ENCODE measurements at regions of chr1 and their contacts with region 1.

Region 1: GRCh38 chr1:32159189-32159885 is 20.1 kb upstream of the TXLNA start:
- DNase-seq: no peak

Region 2: DNA sequence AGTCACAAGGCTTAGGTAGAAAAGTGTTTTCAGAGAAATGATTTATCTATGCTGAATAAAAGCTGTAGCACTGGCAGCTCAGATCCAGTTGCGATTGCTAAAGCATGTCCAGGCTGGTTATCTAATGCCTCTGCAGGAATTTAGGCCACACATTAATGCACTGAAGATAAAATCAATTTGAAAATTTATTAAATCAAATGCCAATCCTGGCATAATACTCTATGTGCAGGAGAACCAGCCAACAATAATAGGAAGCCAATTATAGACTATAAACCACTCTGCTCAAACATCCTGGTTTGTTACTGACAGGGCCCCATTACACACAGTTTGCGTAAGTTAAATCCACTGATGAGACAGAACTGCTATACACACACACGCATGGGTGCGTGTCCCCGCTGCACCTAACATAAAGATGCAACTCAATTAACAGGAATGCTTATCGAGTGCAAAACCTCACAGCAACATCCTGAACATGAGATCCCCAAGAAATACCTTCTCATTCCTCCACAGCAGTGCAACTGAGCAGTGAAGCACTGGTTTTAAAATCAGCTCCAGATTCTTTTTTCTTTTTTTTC is 261.7 kb before region 1 on chr1:
- intact Hi-C with region 1: no loop called
- DNase-seq: no peak

Region 3: DNA sequence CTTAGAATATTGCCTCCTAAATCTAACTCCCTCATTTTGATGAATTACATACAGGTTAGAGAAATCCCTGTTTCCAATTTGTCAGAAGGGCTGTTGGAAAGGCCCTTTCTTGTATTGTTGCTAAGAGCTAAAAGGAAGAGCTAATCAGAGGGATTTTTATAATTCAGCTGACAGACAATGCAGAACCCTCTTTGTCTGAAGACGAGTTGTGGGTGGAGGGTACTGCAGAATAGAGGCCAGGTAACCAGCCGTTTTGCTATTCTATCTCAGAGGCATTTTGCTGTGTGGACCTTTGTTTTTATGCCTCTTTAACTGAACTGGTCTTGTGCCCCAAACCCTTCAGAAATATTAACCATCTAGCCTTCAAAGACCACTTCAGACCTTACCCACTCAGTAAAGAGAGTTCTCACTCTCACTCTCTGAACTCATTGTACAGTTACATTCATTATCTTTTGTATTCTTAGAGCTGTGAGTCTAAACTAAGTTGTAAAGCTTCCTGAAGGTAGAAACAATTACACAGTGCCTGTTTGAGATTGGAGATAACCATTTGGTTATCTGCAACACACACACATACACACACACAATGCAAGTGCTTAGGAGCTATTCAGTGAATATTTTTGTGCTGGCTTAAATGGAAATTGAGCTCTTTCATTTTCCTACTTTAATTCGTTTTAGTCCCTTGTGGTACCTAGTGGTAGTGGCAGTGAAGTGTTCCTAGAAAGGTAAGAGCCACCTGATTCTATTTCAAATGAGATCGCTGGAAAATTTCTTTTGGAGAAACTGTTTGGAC is 31.7 kb before region 1 on chr1:
- intact Hi-C with region 1: loop called in 1 of 2 experiments (anchors 2 kb)
- DNase-seq: no peak